Endothelial cell of umbilical vein (primary cell): ENCODE measurements at regions of chr6 and their contacts with region 1.

Region 1: GRCh38 chr6:144294016-144294415 is 8.9 kb downstream of the UTRN start:
- DNase-seq: peak; percentile 59
- H3K4me3 ChIP-seq: no peak overlapping the region
- H3K27ac ChIP-seq: peak overlapping the region; percentile 81
- H3K4me1 ChIP-seq: peaks cover 26% of the 10 kb centered on the region
- H3K27me3 ChIP-seq: no peaks in the 10 kb centered on the region
- CTCF ChIP-seq: no peak
- POLR2A ChIP-seq: no peak

Region 2: DNA sequence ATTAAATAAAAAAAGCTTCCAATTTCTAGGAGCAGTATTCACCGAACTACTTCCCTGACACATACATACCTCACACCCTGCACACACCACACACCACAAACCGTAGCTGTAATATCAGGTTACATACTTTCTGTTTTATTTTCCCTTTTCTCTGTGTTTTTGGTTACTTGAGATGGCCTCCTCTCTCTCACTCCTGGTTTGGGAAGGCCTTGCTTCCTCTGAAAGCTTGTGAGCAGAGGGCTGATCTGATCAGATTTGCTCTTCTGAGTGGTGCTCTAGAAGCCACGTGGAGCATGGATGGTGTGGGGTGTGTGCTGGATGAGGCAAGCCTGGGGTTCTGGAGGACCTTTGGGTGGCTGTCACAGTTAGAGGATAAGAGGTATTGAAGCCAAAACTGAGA is 12.0 kb after region 1 on chr6:
- CTCF ChIA-PET with region 1: interaction called, 10 read pairs
- POLR2A ChIA-PET with region 1: no interaction called
- dilution Hi-C with region 1: no loop called
- intact Hi-C with region 1: no loop called
- DNase-seq: no peak
- H3K4me3 ChIP-seq: no peak overlapping the region
- H3K27ac ChIP-seq: no peak overlapping the region
- H3K4me1 ChIP-seq: no peaks in the 10 kb centered on the region
- H3K27me3 ChIP-seq: no peaks in the 10 kb centered on the region
- CTCF ChIP-seq: no peak
- POLR2A ChIP-seq: no peak

Region 3: DNA sequence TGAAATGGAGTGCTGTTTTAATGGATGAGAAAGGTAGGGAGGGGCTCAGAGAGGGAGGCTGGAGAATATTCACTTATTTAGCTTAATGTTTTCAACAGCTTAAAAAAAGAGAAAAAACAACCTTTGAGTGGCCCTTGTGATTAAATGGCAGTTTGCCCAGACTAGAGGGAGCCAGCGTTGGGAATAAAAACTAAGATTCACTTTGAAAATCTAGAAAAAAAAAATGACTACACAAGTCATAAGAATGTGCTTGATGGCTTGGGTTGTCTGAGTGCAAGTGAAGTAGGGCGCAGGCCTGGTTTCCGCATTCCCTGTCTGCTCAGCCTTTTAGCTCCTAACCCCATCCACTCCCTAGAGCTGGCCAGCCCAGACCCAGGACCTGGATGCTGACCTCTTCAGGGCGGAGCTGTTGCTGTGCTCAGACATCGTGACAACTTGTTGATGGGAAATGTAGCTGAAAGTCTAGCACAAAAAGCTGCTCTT is 20.0 kb after region 1 on chr6:
- CTCF ChIA-PET with region 1: interaction called, 10 read pairs
- POLR2A ChIA-PET with region 1: no interaction called
- dilution Hi-C with region 1: no loop called
- intact Hi-C with region 1: loop called (anchors 1 kb)
- DNase-seq: peak; percentile 90
- H3K4me3 ChIP-seq: no peak overlapping the region
- H3K27ac ChIP-seq: peak overlapping the region; percentile 6
- H3K4me1 ChIP-seq: peaks cover 49% of the 10 kb centered on the region
- H3K27me3 ChIP-seq: no peaks in the 10 kb centered on the region
- CTCF ChIP-seq: no peak
- POLR2A ChIP-seq: no peak

Region 4: DNA sequence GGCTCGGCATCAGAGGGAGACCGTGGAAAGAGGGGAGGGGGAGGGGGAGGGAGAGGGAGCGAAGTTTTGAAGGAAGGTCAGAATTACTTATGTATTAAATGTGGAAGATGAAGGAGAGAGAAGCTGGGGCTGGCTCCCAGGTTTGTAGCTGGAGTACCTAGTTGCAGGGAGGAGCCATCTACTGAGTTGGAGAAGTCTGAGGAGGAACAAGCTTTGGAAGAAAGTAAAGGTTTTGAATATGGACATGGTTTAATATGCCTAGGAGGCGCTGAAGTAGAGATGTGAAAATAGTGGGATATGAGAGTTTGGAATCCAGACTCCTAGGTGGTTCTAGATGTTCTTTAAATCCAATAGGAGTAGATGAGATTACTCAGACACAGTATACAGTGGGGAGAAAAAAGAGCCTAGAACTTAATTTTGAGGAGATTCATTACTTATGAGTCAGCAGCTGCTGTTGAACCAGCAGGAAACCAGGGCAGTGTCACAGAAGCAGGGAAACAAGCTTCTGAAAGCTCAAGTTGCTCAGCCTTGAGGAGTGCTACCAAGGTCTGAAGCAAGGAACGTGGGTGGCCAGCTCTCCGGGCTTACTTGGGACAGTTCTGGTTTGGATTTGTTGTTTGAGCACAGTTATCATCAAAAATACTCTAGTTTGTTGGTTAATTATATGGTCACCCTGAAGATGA is 140.4 kb after region 1 on chr6:
- CTCF ChIA-PET with region 1: no interaction called
- POLR2A ChIA-PET with region 1: no interaction called
- dilution Hi-C with region 1: no loop called
- intact Hi-C with region 1: no loop called
- DNase-seq: peak; percentile 89
- H3K4me3 ChIP-seq: no peak overlapping the region
- H3K27ac ChIP-seq: peak overlapping the region; percentile 43
- H3K4me1 ChIP-seq: peaks cover 14% of the 10 kb centered on the region
- H3K27me3 ChIP-seq: no peaks in the 10 kb centered on the region
- CTCF ChIP-seq: no peak
- POLR2A ChIP-seq: no peak